ENCODE measurements at regions of chr11 and their contacts with region 1.

Region 1: GRCh38 chr11:71928737-71929452 is at the start of gene RNF121:
- DNase-seq: peak; percentile 99
- H3K4me3 Mint-ChIP-seq: peak within 1 kb of the TSS; percentile 86
- H3K27ac Mint-ChIP-seq: peak within 1 kb of the TSS; percentile 97
- H3K4me1 Mint-ChIP-seq: peaks cover 44% of the 10 kb centered on the region
- H3K27me3 Mint-ChIP-seq: no peaks in the 10 kb centered on the region
- total RNA-seq, gene RNF121: 34.9 to 37.1 TPM

Region 2: DNA sequence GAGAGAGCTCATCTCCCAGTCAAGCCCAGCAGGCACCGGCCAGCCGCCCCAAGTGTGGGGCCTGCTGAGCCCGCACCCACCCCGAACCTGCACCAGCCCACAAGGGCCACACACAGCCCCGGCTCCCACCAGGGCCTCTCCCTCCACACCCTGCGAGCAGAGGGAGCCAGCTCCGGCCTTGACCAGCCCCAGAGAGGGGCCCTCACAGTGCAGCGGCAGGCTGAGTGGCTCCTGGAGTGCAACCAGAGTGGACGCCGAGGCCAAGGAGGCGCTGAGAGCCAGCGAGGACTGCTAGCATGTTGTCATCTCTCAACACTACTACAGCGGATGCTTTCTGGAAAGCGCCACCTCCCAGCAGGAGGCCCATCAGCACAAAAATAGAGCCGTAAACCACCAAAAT is 85.0 kb before region 1 on chr11:
- CTCF ChIA-PET with region 1: no interaction called
- POLR2A ChIA-PET with region 1: no interaction called
- intact Hi-C with region 1: no loop called
- DNase-seq: no peak
- H3K4me3 Mint-ChIP-seq: no peak overlapping the region
- H3K27ac Mint-ChIP-seq: no peak overlapping the region
- H3K4me1 Mint-ChIP-seq: no peaks in the 10 kb centered on the region
- H3K27me3 Mint-ChIP-seq: no peaks in the 10 kb centered on the region

Region 3: GRCh38 chr11:71913756-71914526 is 15.0 kb before region 1 on chr11:
- CTCF ChIA-PET with region 1: interaction called, 14 read pairs
- POLR2A ChIA-PET with region 1: interaction called, 8 read pairs
- intact Hi-C with region 1: loop called (anchors 1 kb)
- DNase-seq: no peak
- H3K4me3 Mint-ChIP-seq: no peak overlapping the region
- H3K27ac Mint-ChIP-seq: peak overlapping the region; percentile 75
- H3K4me1 Mint-ChIP-seq: peaks cover 28% of the 10 kb centered on the region
- H3K27me3 Mint-ChIP-seq: no peaks in the 10 kb centered on the region

Region 4: GRCh38 chr11:71962428-71963038 is 33.6 kb after region 1 on chr11:
- CTCF ChIA-PET with region 1: interaction called, 6 read pairs
- POLR2A ChIA-PET with region 1: interaction called, 6 read pairs
- intact Hi-C with region 1: loop called (anchors 2 kb)
- DNase-seq: no peak
- H3K4me3 Mint-ChIP-seq: no peak overlapping the region
- H3K27ac Mint-ChIP-seq: peak overlapping the region; percentile 79
- H3K4me1 Mint-ChIP-seq: peaks cover 22% of the 10 kb centered on the region
- H3K27me3 Mint-ChIP-seq: no peaks in the 10 kb centered on the region

Measured in activated CD4-positive, alpha-beta memory T cell treated with anti-CD3 and anti-CD28 coated beads for 36 hours (primary cell).